HEK293T (cell line): ENCODE measurements at regions of chr11 and their contacts with region 1.

Region 1: GRCh38 chr11:31107062-31107461 is 262.5 kb downstream of the DCDC1 start:
- DNase-seq: peak; percentile 64

Region 2: DNA sequence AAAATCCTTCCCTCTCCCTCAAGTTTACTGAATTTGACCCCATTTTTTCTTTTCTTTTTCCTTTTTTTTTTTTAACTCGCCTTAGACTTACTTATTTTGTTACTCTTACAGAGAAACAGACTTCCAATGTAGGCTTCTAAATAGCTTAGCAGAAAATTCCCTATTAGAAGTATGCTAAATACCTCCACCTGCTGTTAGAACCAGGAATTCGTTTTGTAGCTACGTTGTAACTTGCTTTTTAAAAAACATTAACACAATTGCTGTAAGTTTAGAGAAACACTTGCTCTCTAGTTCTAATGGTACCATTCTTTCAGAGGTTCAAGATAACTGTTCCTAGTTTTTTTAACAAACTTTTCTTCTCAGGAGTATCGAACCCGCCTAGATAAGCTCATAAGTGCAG is 61.7 kb before region 1 on chr11:
- CTCF ChIA-PET with region 1: no interaction called
- POLR2A ChIA-PET with region 1: no interaction called
- DNase-seq: peak; percentile 15

Region 3: DNA sequence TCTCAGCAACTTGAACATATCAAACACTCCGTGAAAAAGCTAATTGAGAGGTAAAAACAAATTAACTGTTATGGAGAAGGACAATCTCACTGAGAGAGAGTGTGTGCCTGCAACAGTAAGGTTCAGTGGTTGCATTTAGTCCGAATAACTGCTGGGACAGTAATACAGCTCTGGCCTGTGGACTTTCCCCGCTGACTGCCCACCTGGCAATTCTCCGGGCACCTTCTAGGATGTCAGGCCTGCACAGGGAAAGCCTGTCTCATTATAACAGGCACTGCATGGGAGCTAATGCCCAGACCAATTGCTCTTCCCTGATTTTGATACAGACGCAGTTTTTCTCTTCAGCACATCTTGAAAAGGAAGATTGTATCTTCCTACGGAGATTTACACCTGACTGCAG is 11.5 kb after region 1 on chr11:
- CTCF ChIA-PET with region 1: interaction called, 11 read pairs
- POLR2A ChIA-PET with region 1: no interaction called
- DNase-seq: no peak

Region 4: DNA sequence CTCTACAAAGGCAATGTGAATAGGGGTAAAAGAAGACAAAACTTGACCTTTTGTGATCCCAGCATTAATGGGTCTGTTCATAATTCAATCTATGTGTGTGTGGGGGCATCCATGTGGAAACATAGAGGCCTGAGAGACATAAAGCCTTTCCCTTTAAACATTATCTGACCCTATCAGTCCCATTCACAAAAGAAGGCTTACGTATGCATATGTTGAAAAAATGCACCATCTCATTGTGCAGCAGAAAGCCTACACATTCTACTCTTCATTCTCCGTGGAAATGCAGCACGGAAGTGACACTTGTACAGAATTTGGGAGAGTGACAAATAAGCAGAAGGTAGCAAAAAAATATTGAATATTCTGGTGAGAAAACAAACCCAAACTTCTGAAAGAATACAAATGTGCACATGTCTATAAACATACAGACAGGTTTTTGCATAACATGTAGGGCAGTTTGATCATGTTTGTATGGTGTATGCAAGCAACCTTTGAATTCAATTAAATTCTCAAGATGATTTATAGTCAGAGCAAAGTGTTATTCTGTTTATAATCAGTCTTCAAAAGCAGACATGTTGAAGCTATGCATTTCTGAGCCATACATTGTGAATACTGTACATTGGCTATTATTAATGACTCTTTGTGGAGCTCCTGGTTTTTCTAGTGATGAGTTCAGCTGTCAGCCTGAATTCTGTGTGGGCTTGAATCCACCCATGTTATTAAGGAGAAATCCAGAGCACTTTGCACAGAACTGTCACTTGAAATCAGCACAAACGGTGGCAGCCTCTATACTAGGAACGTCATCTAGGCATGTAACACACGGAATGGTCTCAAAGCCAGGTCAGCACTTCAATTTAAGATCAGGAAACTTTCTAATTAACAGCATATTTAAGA is 25.7 kb after region 1 on chr11:
- CTCF ChIA-PET with region 1: no interaction called
- POLR2A ChIA-PET with region 1: no interaction called
- DNase-seq: no peak

Region 5: GRCh38 chr11:31233424-31233823 is 126.4 kb after region 1 on chr11:
- CTCF ChIA-PET with region 1: interaction called, 13 read pairs
- POLR2A ChIA-PET with region 1: no interaction called
- DNase-seq: no peak